ENCODE measurements at regions of chr17 and their contacts with region 1.

Region 1: DNA sequence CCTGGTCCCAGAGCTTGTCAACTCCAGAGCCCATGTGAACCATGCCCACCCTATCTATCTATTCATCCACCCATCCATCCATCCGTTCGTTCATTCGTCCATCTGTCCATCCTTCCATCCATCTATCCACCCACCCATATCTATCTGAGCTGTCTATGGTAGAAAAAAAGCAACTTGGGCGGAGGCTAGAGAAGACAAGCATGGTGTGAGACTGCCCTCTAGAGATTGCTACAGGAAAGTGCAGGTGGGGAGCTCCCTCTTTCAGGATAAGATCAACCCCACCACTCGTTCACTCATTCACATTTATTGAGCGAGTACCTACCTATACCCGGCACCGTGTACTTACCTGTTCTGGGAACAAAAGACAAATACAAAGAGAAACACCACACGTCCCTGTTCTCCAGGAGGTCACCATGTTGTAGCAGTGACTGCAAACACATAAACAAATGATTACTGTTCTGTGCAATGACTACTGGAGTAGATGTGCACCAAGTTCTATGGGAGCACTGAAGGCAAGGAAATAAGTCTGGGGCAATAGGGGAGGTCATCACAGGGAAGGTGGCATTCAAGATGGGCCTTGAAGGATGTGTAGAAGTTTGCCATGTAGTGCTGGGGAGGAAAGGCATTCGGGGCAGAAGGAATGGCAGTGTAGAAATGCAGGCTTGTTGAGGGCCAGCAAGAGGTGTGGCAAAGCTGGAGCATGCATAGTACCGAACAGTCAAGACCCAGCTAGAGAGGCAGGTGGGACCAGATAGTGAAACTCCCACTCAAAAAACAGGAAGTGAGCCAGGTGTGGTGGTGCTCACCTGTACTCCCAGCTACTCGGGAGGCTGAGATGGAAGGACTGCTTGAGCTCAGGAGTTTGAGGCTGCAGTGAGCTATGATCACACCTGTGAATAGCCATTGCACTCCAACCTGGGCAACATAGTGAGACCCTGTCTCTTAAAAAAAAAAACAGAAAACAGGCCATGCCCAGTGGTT is 13.4 kb upstream of the ATP5MC1 start:
- DNase-seq: peak; percentile 73
- ATAC-seq: peak; percentile 82
- H3K4me3 Mint-ChIP-seq: no peak overlapping the region
- H3K27ac Mint-ChIP-seq: no peak overlapping the region
- H3K4me1 Mint-ChIP-seq: peaks cover 25% of the 10 kb centered on the region
- H3K27me3 Mint-ChIP-seq: peaks cover 9% of the 10 kb centered on the region

Region 2: DNA sequence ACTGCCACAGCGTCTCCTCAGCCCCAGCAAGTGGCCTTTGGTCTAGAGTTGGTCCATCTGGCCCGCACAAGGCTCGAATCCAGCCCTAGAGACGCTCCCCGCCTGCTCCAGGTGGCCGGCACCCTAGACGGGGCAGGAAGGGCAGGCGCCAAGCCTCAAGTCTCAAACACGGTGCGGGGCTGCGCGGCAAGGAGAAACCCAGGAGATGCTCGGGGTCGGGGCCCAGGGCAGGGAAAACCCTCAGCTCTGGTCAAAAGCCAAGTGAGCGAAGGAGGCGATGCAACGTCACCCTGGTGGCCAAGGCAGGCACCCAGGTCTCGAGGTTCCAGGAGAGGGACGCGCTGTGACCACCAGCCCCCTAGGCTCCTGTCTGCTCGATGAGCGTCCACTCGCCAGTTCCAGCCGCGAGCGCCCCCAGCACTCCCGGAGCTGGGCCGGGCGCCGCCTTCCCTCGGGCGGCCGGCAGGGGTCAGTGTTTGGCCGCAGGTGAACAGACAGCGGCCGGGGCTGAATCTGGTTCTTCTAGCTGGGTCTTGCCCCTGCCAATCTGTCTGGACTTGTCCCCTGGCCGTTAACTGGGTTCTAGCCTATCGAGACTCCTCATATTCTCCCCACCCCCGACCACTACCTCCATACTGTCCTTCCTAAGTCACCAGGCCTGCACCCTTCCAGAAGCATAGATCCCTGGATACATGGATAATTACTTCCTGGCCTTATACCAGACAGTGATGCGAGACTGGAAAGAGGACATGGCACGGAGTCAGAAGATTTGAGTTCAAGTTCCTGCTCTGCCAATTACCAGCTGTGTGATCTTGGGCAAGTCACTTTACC is 200.9 kb before region 1 on chr17:
- CTCF ChIA-PET with region 1: interaction called, 78 read pairs
- POLR2A ChIA-PET with region 1: no interaction called
- DNase-seq: peak; percentile 76
- ATAC-seq: peak; percentile 96
- H3K4me3 Mint-ChIP-seq: no peak overlapping the region
- H3K27ac Mint-ChIP-seq: no peak overlapping the region
- H3K4me1 Mint-ChIP-seq: peaks cover 2% of the 10 kb centered on the region
- H3K27me3 Mint-ChIP-seq: peaks cover 54% of the 10 kb centered on the region

Region 3: GRCh38 chr17:48767263-48767774 is 111.9 kb before region 1 on chr17:
- CTCF ChIA-PET with region 1: interaction called, 12 read pairs
- POLR2A ChIA-PET with region 1: no interaction called
- DNase-seq: no peak
- ATAC-seq: no peak
- H3K4me3 Mint-ChIP-seq: no peak overlapping the region
- H3K27ac Mint-ChIP-seq: no peak overlapping the region
- H3K4me1 Mint-ChIP-seq: peaks cover 5% of the 10 kb centered on the region
- H3K27me3 Mint-ChIP-seq: peaks cover 43% of the 10 kb centered on the region

Region 4: DNA sequence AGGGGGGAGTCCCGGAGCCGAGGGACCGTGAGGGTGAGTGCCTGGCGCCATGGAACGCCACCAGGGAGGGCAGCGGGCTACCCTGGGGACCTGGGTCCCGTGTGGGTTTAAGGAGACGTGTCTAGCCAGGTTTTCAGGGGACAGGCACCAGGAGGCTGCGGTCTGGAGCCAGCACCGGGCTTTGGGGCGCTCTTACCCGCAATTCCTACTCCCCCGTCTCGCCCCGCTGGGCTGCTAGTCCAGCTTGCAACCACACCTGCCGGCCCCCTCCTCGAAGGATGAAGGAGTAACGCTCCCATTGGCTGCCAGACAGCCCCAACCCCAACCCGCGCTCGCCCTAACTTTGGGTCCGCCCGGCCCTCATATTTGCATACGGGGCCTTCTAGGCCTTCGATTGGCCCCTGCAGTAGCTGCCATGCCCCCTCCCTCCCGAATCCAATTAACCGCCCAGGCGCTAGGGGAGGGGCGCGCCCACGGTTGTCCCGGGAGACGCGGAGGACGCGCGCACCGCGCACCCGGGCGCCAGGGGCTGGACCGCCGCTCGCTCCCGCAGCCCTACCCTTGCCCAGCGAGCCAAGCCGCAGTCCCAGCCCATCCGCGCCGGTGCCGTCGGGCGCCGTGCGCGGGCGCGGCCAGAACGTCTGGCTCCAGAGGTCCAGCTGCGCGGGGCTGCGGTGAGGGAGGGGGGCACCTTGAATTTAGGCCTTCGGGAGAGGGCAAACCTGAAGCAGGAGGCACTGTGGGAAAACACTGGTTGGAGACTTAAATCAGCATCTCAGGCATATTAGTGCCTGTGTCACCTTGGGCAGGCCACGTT is 62.2 kb before region 1 on chr17 and contains the start of gene TTLL6:
- CTCF ChIA-PET with region 1: interaction called, 756 read pairs
- POLR2A ChIA-PET with region 1: interaction called, 5 read pairs
- DNase-seq: peak; percentile 88
- ATAC-seq: peak; percentile 98
- H3K4me3 Mint-ChIP-seq: peak within 1 kb of the TSS; percentile 75
- H3K27ac Mint-ChIP-seq: peak within 1 kb of the TSS; percentile 52
- H3K4me1 Mint-ChIP-seq: peaks cover 19% of the 10 kb centered on the region
- H3K27me3 Mint-ChIP-seq: peaks cover 52% of the 10 kb centered on the region
- total RNA-seq, gene TTLL6: not detected

Region 5: GRCh38 chr17:48841395-48841831 is 37.8 kb before region 1 on chr17:
- CTCF ChIA-PET with region 1: interaction called, 20 read pairs
- POLR2A ChIA-PET with region 1: no interaction called
- DNase-seq: peak; percentile 81
- ATAC-seq: peak; percentile 90
- H3K4me3 Mint-ChIP-seq: peak overlapping the region; percentile 75
- H3K27ac Mint-ChIP-seq: peak overlapping the region; percentile 90
- H3K4me1 Mint-ChIP-seq: peaks cover 64% of the 10 kb centered on the region
- H3K27me3 Mint-ChIP-seq: no peaks in the 10 kb centered on the region

Region 6: DNA sequence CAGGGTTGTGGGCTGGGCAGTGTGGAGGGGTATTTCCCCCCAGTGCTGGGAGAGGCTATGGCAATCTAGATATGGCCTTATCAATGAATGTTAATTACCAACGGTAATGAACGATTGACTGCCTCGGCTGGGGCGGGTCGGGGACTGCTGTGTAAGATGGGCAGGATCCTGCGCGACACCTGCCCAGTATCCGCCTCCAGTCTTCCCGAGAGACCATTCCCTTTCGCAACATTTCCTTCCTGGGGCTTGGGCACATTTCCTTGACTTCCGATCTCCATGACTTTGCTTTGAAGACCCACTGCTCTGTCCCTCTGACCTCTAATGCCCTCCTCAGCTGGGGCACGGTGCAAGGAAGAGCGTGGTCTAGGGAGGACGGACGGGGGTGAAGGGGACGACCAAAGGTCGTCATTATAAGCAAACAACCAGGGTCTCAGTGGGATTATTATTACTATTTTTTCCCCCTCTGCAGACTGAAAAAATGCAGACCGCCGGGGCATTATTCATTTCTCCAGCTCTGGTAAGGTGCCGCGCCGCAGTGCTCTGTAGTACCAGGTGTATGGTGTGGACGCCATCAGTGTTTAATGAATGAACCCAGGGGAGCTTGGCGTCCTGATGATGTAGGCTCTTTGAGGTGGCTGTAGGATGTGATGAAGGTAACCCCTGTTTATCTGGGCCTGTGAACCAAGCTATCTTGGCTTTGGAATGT is 13.9 kb after region 1 on chr17:
- CTCF ChIA-PET with region 1: interaction called, 36 read pairs
- POLR2A ChIA-PET with region 1: interaction called, 3 read pairs
- DNase-seq: peak; percentile 28
- ATAC-seq: no peak
- H3K4me3 Mint-ChIP-seq: peak overlapping the region; percentile 89
- H3K27ac Mint-ChIP-seq: peak overlapping the region; percentile 88
- H3K4me1 Mint-ChIP-seq: peaks cover 38% of the 10 kb centered on the region
- H3K27me3 Mint-ChIP-seq: no peaks in the 10 kb centered on the region

Measured in activated CD8-positive, alpha-beta T cell treated with anti-CD3 and anti-CD28 coated beads, Interleukin-2, amount 10 ng/mL, durations not matched to agents 7 days and 5 days (primary cell).